ENCODE measurements at regions of chr6 and their contacts with region 1.

Region 1: DNA sequence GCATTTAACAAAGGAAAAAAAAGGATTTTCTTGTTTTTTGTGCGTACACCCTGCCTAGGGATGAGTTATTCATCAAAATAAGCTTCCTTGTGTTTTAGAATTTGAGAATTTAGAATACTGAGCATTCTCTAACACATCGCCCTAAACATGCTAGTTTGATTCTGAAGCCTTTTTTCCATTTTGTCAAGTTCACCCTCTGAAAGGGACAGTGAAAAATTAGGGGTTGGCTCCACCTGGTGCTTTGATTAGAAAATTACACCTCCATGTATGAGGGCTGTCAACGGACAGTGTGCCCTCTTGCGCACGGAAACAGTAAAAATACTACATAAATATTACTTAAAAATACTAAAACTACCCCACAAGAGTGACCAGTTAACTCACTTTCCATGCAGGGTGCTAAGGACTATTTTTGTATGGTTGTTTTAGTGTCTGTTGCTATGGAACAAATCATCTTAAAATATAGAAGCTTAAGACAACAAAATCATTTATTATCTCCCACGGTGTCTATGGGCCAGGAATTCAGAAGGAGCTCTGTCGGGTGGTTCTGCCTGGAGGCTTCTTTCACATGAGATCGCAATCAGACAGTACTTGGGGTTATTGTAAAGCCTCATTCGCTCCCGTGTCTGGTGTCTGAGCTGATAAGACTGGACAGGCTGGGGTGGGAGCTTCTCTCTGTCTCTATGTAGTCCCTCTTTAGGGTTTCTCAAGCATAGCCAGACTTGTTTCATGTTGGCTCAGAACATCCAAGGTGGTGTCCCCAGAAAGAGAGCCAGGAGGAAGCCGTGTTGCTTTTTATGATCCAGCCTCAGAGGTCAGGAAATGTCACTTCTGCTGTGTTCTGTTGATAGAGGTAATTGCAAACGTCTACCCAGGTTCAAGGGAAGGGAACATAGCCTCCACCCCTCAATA is 41.1 kb upstream of the TMEM170B start:
- DNase-seq: peak; percentile 84
- ATAC-seq: peak; percentile 77
- H3K4me3 ChIP-seq: no peak overlapping the region
- H3K27ac ChIP-seq: peak overlapping the region; percentile 68
- H3K4me1 ChIP-seq: peaks cover 56% of the 10 kb centered on the region
- H3K27me3 ChIP-seq: no peaks in the 10 kb centered on the region
- CTCF ChIP-seq: peak; percentile 76 to 96 (median 88)
- EP300 ChIP-seq: no peak
- POLR2A ChIP-seq: no peak
- RAD21 ChIP-seq: peak; percentile 99

Region 2: DNA sequence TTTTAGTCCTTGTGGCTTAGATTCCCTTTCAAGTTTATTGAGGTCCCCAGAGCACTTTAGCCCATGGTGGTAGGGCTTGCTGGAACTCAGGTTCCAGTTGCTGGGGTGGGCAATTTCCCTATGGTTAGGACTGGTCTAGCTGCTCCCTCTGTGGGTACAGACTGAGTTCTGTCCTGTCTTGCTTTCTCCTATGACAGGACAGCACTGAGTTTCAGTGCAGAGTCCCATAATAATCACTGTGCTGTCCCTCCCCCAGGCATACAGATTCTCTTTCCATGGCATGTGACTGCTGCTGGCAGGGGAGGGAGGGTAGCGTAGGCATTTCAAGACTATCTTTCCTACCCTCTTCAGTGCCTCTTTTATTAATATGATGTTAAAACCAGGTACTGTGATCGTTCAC is 367.8 kb before region 1 on chr6:
- CTCF ChIA-PET with region 1: interaction called, 3 read pairs
- POLR2A ChIA-PET with region 1: no interaction called
- RAD21 ChIA-PET with region 1: interaction called, 10 read pairs
- SMC1A ChIA-PET with region 1: interaction called, 22 read pairs
- in situ Hi-C with region 1: no loop called
- intact Hi-C with region 1: no loop called
- DNase-seq: no peak
- ATAC-seq: 0 out of 3 replicates have a peak, but pooled peaks have one; percentile 20
- H3K4me3 ChIP-seq: no peak overlapping the region
- H3K27ac ChIP-seq: no peak overlapping the region
- H3K4me1 ChIP-seq: peaks cover 6% of the 10 kb centered on the region; the same call in 1 of the 2 replicates
- H3K27me3 ChIP-seq: no peaks in the 10 kb centered on the region
- CTCF ChIP-seq: no peak
- EP300 ChIP-seq: no peak
- POLR2A ChIP-seq: no peak
- RAD21 ChIP-seq: no peak

Region 3: DNA sequence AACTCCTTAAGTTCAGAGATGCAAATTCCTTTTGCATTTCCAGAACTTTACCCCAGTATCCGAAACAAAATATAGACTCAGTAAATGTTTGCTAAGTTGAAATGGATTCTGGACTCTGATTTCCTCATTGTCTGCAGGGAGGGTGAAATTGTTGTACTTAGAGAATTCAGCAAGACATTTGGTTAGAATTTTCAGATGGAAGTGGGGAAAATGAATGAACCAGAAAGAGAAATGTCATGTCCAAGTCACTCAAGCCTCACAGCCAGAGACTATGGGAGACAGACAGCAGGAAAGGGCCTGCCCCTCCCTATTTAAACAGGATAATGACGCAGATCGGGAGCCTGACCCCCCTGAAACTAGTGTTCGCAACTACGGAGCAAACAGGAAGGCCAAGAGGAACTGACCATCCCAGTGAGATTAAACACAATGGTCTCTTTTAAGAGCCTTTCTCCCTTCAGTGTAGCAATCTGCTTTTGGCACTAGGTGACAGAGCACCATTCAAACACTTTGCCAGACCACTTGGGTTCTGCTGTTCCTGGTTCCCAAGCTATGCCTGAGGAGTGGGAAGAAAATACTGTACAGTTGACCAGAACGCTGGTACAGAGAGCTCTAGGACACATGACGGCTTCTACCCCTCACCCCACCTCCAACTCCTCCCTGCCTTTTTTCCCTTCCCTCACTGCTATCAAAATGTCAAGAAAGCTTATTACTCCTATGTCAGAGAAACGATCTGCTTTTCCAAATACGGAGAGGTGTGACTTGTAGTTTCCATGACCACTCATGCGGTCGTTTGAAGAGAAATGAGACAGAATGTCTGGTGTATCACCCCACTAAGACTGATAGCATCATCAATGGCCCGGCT is 277.6 kb before region 1 on chr6:
- CTCF ChIA-PET with region 1: interaction called, 15 read pairs
- POLR2A ChIA-PET with region 1: no interaction called
- RAD21 ChIA-PET with region 1: interaction called, 14 read pairs
- SMC1A ChIA-PET with region 1: interaction called, 18 read pairs
- in situ Hi-C with region 1: no loop called
- intact Hi-C with region 1: no loop called
- DNase-seq: no peak
- ATAC-seq: no peak
- H3K4me3 ChIP-seq: no peak overlapping the region
- H3K27ac ChIP-seq: no peak overlapping the region
- H3K4me1 ChIP-seq: peaks cover 7% of the 10 kb centered on the region
- H3K27me3 ChIP-seq: no peaks in the 10 kb centered on the region
- CTCF ChIP-seq: no peak
- EP300 ChIP-seq: no peak
- POLR2A ChIP-seq: no peak
- RAD21 ChIP-seq: no peak

Region 4: DNA sequence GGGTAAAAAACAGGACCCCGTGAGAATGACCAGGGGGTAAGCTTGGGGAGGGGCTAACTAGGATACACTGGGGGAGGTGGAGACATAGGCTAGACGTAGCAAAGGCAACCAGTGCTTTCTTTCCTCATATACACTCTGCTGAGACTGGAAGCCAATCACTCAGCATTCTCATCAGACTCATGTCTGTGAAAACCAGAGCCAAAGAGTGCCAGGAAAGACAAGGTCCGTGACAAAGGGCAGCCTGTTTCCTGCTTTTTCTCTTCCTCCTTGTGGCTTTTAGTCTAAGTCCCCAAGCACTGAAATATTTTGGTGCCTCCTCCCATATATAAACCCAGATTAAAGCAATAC is 166.0 kb before region 1 on chr6:
- CTCF ChIA-PET with region 1: interaction called, 16 read pairs
- POLR2A ChIA-PET with region 1: no interaction called
- RAD21 ChIA-PET with region 1: interaction called, 66 read pairs
- SMC1A ChIA-PET with region 1: interaction called, 65 read pairs
- in situ Hi-C with region 1: no loop called
- intact Hi-C with region 1: no loop called
- DNase-seq: no peak
- ATAC-seq: peak; percentile 35; the same call in 2 of the 3 replicates
- H3K4me3 ChIP-seq: no peak overlapping the region
- H3K27ac ChIP-seq: peak overlapping the region; percentile 58
- H3K4me1 ChIP-seq: peaks cover 35% of the 10 kb centered on the region
- H3K27me3 ChIP-seq: no peaks in the 10 kb centered on the region
- CTCF ChIP-seq: no peak
- EP300 ChIP-seq: no peak
- POLR2A ChIP-seq: no peak
- RAD21 ChIP-seq: no peak

Region 5: DNA sequence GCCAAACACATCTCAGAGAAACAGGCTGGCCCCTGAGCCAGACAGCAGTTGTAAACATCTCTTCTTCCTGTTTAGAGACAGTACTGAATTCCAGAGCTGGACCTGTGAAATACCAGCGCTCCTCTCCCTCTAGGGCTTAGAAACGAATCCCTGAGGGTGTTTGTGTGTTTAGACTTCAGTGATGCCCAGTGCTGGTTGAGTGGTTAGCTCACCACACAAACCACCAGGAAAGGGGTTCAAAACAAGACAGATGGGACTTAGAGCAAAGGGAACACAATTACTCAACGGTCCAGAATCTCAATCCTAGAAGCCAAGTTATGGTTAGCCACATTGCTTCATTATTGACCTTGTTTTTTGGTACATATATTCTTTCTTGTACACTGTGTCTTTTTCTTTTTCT is 67.5 kb before region 1 on chr6:
- CTCF ChIA-PET with region 1: interaction called, 7 read pairs
- POLR2A ChIA-PET with region 1: interaction called, 6 read pairs
- RAD21 ChIA-PET with region 1: interaction called, 27 read pairs
- SMC1A ChIA-PET with region 1: interaction called, 35 read pairs
- in situ Hi-C with region 1: no loop called
- intact Hi-C with region 1: loop called (anchors 1 kb)
- DNase-seq: peak; percentile 83
- ATAC-seq: peak; percentile 81
- H3K4me3 ChIP-seq: no peak overlapping the region
- H3K27ac ChIP-seq: peak overlapping the region; percentile 51; the same call in 1 of the 2 replicates
- H3K4me1 ChIP-seq: peaks cover 33% of the 10 kb centered on the region
- H3K27me3 ChIP-seq: no peaks in the 10 kb centered on the region
- CTCF ChIP-seq: no peak
- EP300 ChIP-seq: peak in 1 of 2 experiments; percentile 65; a peak in 2 of 4 replicates
- POLR2A ChIP-seq: no peak
- RAD21 ChIP-seq: no peak

Region 6: GRCh38 chr6:11485271-11485670 is 11.1 kb before region 1 on chr6:
- CTCF ChIA-PET with region 1: interaction called, 6 read pairs
- POLR2A ChIA-PET with region 1: no interaction called
- RAD21 ChIA-PET with region 1: interaction called, 5 read pairs
- SMC1A ChIA-PET with region 1: interaction called, 16 read pairs
- in situ Hi-C with region 1: no loop called
- intact Hi-C with region 1: no loop called
- DNase-seq: no peak
- ATAC-seq: no peak
- H3K4me3 ChIP-seq: no peak overlapping the region
- H3K27ac ChIP-seq: no peak overlapping the region
- H3K4me1 ChIP-seq: no peaks in the 10 kb centered on the region
- H3K27me3 ChIP-seq: no peaks in the 10 kb centered on the region
- CTCF ChIP-seq: no peak
- EP300 ChIP-seq: no peak
- POLR2A ChIP-seq: no peak
- RAD21 ChIP-seq: no peak

Region 7: DNA sequence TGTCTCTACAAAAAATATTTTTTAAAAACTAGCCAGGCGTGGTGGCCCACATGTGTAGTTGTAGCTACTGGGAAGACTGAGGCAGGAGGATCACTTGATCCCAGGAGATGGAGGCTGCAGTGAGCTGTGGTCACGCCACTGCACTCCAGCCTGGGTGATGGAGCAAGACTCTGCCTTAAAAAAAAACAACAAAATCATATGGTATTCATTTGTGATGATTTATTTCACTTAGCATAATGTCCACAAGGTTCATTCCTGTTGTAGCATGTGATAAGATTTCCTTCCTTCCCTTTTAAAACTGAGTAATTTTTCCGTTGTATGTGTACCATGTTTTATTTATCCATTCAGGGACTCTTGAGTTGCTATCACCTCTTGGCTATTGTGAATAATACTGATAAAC is 67.4 kb after region 1 on chr6:
- CTCF ChIA-PET with region 1: interaction called, 12 read pairs
- POLR2A ChIA-PET with region 1: no interaction called
- RAD21 ChIA-PET with region 1: interaction called, 10 read pairs
- SMC1A ChIA-PET with region 1: interaction called, 8 read pairs
- in situ Hi-C with region 1: no loop called
- intact Hi-C with region 1: no loop called
- DNase-seq: no peak
- ATAC-seq: no peak
- H3K4me3 ChIP-seq: no peak overlapping the region
- H3K27ac ChIP-seq: no peak overlapping the region
- H3K4me1 ChIP-seq: no peaks in the 10 kb centered on the region
- H3K27me3 ChIP-seq: no peaks in the 10 kb centered on the region
- CTCF ChIP-seq: no peak
- EP300 ChIP-seq: no peak
- POLR2A ChIP-seq: no peak
- RAD21 ChIP-seq: no peak

Measured in GM12878 (cell line).